CD4-positive, alpha-beta T cell (primary cell): ENCODE measurements at regions of chr22 and their contacts with region 1.

Region 1: DNA sequence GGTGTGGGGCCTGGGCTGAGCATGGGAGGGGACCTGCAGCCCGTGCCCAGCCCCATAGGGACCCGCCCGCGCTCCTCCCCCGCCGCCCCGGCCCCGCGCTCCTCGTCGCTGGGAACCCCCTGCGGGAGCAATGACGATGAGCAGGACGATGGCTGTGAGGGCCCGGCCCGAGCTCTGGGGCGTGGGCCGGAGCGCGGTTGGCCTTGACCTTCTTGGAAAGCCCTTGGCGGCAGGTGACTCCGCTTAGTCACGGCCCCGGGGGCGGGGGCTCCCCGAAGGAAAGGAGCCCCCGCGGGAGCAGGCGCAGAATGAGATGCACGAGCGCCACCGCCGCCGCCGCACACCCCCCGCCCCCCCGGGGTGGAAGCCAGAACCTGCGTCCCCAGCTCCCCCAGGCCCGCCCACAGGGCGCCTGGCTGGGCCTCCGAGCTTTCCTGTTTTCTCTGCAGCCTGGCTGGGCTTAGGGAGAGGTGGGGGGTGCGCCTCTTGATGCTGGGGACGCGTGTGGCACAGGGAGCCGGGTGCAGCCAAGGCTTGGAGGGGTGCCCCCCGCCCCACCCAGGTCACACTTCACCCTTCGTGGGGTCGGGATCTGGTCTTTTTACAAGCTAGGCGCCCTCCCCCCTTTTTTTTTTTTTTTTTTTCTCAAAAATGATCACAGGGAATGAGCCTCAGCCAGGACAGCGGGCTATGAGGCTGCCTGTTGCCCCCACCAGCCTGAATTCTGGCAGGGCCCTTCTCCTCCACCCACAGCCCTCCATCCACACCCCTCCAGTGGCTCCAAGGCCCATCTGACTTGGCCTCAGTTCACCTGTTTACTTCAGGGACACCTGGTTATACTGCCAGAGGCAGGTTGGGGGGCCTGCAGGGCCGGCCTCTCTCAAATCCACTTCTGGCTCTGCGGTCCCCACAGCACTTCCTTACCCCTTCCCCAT is 17.9 kb downstream of the CRELD2 start:
- DNase-seq: peak; percentile 85 to 97 (median 92)
- ATAC-seq: peak; percentile 74
- H3K4me3 ChIP-seq: peak overlapping the region; percentile 47
- H3K4me3 Mint-ChIP-seq: peak overlapping the region; percentile 76
- H3K27ac ChIP-seq: peak overlapping the region; percentile 86 to 88
- H3K27ac Mint-ChIP-seq: peak overlapping the region; percentile 87
- H3K4me1 ChIP-seq: peaks cover 58% of the 10 kb centered on the region
- H3K4me1 Mint-ChIP-seq: peaks cover 13% of the 10 kb centered on the region
- H3K27me3 ChIP-seq: no peaks in the 10 kb centered on the region
- H3K27me3 Mint-ChIP-seq: no peaks in the 10 kb centered on the region
- CTCF ChIP-seq: no peak

Region 2: GRCh38 chr22:49951000-49951677 is 14.9 kb after region 1 on chr22:
- CTCF ChIA-PET with region 1: interaction called, 7 read pairs
- POLR2A ChIA-PET with region 1: interaction called, 17 read pairs
- intact Hi-C with region 1: no loop called
- DNase-seq: peak in 1 of 14 experiments; percentile 25
- ATAC-seq: peak; percentile 73
- H3K4me3 ChIP-seq: no peak overlapping the region
- H3K4me3 Mint-ChIP-seq: no peak overlapping the region
- H3K27ac ChIP-seq: no peak overlapping the region
- H3K27ac Mint-ChIP-seq: no peak overlapping the region
- H3K4me1 ChIP-seq: peaks cover 20% of the 10 kb centered on the region
- H3K4me1 Mint-ChIP-seq: no peaks in the 10 kb centered on the region
- H3K27me3 ChIP-seq: no peaks in the 10 kb centered on the region
- H3K27me3 Mint-ChIP-seq: no peaks in the 10 kb centered on the region
- CTCF ChIP-seq: no peak

Region 3: GRCh38 chr22:49970528-49971231 is 34.4 kb after region 1 on chr22:
- CTCF ChIA-PET with region 1: interaction called, 6 read pairs
- POLR2A ChIA-PET with region 1: interaction called, 32 read pairs
- intact Hi-C with region 1: loop called (anchors 2 kb)
- DNase-seq: peak; percentile 81 to 98 (median 93)
- ATAC-seq: peak; percentile 86
- H3K4me3 ChIP-seq: peak overlapping the region; percentile 56
- H3K4me3 Mint-ChIP-seq: peak overlapping the region; percentile 87
- H3K27ac ChIP-seq: no peak overlapping the region
- H3K27ac Mint-ChIP-seq: peak overlapping the region; percentile 83
- H3K4me1 ChIP-seq: peaks cover 66% of the 10 kb centered on the region
- H3K4me1 Mint-ChIP-seq: peaks cover 25% of the 10 kb centered on the region
- H3K27me3 ChIP-seq: no peaks in the 10 kb centered on the region
- H3K27me3 Mint-ChIP-seq: no peaks in the 10 kb centered on the region
- CTCF ChIP-seq: no peak

Region 4: DNA sequence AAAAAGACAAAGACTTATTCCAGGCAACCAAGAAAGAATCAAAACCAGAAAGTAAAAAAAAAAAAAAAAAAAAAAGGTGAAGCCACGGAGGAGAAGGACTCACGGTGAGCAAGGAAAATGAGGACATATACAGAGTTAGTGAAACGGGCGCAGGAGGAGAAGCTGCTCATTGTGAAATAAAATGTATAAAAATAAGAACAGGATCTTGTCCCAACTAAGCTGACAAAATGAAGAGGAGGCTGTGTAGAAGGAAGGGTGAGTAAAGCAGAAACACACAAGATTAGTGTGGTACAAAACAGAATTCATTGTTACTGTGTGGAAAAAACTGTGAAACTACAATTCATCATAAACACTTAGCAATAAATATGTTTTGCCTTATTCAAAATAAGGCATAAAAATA is 68.6 kb after region 1 on chr22:
- CTCF ChIA-PET with region 1: no interaction called
- POLR2A ChIA-PET with region 1: no interaction called
- intact Hi-C with region 1: no loop called
- DNase-seq: no peak
- ATAC-seq: no peak
- H3K4me3 ChIP-seq: no peak overlapping the region
- H3K4me3 Mint-ChIP-seq: no peak overlapping the region
- H3K27ac ChIP-seq: no peak overlapping the region
- H3K27ac Mint-ChIP-seq: no peak overlapping the region
- H3K4me1 ChIP-seq: peaks cover 7% of the 10 kb centered on the region
- H3K4me1 Mint-ChIP-seq: no peaks in the 10 kb centered on the region
- H3K27me3 ChIP-seq: peaks cover 8 to 10% of the 10 kb centered on the region in 2 experiments
- H3K27me3 Mint-ChIP-seq: peaks cover 9% of the 10 kb centered on the region
- CTCF ChIP-seq: no peak